AG04449 (cell line): ENCODE measurements at regions of chr15 and their contacts with region 1.

Region 1: DNA sequence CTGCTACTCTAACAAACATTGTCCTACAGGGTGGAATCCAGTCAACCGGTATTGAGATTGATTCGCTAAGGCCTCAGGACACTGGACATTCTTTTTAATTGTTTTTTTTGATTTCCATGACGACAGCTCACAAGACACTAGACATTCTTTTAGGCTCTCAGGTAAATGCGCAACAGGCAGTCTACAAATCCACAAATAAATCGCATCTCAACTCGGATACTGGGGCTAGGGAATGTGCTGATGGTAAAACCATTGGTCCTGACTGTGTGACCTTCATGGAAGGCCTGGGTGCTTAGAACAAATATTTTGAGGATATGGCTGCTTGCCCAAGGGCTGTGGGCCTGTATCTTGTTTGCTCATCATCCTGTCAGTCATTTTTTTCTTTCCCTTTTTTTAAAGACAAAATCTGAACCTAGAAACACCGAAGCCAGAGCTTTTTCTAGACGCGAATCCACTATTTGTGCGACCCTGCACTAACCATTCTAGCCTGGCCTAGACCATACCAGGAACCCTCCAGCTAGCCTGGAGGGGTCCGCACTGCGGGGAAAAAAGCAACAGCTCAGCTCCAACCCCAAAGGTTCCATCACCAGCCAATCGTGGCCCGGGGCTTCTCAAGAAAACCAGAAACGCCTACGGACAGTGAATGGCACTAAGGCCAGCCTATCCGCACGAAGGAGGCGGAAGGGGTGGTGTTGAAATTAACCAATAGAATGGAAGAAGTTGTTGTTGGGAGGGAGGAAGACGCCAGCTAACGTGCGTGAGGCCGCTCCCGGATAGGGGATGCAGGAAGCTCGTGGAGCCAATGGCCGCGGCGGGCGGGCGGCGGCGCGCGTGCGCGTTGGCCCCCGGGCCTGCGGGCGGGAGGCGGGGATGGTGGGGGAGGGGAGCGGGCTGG is 18.1 kb upstream of the CHD2 start:
- DNase-seq: peak; percentile 99
- H3K4me3 ChIP-seq: peak overlapping the region; percentile 52
- CTCF ChIP-seq: no peak

Region 2: DNA sequence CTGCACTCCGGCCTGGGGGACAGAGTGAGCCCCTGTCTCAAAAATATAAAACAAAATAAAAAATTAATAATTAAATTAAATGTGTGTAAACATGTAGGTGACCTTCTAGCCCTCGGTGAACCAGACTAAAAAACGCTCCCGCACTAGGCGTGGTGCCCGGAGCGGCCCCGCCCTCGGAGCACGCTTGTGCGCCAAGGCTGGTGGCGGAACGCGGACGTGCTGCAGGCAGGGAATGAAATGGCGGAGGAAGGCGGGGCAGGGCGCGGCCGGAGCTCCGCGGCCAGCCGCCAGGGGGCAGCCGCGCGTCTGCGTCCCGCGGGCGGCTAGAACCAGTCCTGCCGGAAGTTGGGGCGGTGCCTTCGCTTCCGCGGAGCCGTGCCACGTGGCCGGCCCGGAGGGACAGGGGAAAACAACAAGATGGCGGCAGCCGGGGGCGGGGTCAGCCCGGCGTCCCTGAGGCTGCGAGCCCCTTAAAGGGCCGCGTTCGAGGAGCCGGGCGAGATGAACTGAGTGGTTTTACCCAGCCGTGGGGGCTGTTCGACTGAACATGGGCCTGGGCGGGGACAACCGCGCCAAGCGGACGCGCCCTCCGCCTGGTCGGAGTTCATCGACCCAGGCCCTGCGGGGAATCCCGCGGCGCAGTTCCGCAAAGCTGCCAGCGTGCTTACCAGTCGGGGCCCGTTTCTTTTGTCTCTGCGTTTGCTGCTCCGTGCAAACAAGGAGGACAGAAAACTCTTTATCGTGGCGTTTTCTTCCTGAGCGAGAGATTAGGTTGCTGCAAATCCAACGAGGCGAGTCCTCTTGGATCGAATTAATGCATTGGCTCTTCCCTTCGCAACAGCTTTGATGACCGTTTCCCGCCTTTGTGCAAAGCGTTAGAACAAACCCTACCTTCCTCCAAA is 72.8 kb before region 1 on chr15:
- CTCF ChIA-PET with region 1: interaction called, 36 read pairs
- POLR2A ChIA-PET with region 1: interaction called, 45 read pairs
- DNase-seq: no peak
- H3K4me3 ChIP-seq: peak overlapping the region; percentile 60
- CTCF ChIP-seq: peak; percentile 73

Region 3: GRCh38 chr15:92831655-92832328 is 50.3 kb before region 1 on chr15:
- CTCF ChIA-PET with region 1: interaction called, 3 read pairs
- POLR2A ChIA-PET with region 1: interaction called, 36 read pairs
- DNase-seq: peak; percentile 73
- H3K4me3 ChIP-seq: peak overlapping the region; percentile 8
- CTCF ChIP-seq: no peak

Region 4: GRCh38 chr15:92868992-92869988 is 12.8 kb before region 1 on chr15:
- CTCF ChIA-PET with region 1: interaction called, 4 read pairs
- POLR2A ChIA-PET with region 1: interaction called, 16 read pairs
- DNase-seq: peak; percentile 47
- H3K4me3 ChIP-seq: no peak overlapping the region
- CTCF ChIP-seq: no peak